H1 (cell line): ENCODE measurements at regions of chr2 and their contacts with region 1.

Region 1: DNA sequence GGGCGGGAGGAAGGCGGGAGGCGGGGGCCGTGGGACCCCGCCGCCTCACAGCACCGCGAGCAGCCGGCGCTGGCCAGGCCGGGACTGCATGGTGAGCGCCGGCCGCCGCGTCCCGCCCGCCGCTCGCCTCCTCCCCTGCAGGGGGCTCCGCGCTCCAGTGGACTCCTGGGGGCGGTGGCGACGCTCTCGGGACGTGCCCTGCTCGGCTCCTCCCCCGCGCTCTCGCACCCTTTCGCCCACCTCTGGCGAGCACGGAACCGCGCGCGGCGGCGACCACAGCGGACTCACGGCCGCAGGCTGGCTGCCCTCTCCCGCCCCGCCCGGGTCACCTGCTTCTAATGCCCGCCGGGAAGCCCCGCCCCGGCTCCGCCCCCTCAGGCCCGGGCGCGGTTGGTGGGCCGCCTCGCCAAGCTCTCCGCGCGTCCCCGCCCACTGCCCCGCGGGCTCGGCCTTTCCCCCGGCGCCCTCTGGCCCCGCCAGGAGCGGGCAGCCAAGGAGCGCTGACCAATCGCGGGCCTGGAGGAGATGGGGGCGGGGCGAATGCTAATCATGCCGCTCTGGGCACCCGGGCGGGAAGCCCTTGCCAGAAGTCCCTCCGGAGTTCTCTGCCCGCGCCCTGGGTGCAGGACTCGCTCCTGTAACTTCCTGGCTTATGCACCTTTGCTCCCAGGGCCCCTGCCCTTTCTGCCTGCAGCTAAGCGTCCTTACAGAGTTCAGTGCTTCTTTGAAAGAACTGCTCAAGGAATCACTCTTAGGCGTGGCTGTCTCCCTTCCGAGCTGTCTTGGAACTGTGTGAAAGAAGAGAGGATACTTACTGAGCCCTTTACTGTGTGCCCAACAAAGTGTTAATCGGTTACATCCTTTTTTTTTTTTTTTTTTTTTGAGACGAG is at the start of gene FZD5:
- DNase-seq: peak; percentile 94 to 99
- H3K4me3 ChIP-seq: peak within 1 kb of the TSS; percentile 84 to 96 (median 86)
- H3K27ac ChIP-seq: peak within 1 kb of the TSS; percentile 24; the same call in 1 of the 2 replicates
- H3K4me1 ChIP-seq: peaks cover 0 to 32% (median 26%) of the 10 kb centered on the region in 4 experiments; a peak in 6 of 7 replicates
- H3K27me3 ChIP-seq: peaks cover 0 to 4% (median 1%) of the 10 kb centered on the region in 4 experiments; a peak in 1 of 7 replicates
- CTCF ChIP-seq: peak; percentile 17 to 27 (median 25); a peak in 3 of 4 replicates
- EP300 ChIP-seq: no peak
- POLR2A ChIP-seq: peak; percentile 73 to 89
- RAD21 ChIP-seq: peak; percentile 28 to 48; a peak in 3 of 4 replicates
- total RNA-seq, gene FZD5: 55.2 and 56.6 TPM in 2 replicates

Region 2: DNA sequence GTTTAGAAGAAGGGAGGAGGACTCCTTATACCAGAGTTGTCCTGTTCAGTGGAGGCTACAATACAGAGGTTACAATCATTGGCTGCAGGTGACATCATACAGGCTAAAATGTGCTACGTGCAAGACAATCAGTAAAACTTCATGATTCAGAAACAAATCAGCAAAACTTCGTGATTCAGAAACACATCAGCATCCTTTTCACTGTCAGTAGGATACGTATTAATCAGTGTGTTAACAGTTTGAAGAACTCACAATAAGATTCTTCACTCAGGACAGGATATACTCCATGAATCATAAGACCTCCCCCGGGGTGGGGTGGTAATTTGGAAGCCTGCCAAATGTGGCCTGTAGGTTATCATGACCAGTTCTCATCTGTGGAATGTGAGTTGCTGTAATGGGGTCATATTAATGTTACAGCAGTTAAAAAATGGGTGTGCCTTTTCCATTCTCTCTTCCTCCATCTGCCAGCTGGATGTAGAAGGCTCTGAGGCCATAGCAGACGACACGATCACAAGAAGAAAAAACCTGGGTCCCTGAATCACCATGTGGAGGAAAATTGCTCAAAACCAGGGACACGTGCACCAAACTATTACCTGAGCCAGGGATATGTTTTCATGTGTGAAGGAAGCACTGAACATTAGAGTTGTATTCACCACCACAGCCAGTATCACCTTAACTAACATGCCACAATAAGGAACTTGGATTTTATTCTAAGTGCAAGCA is 374.9 kb before region 1 on chr2:
- CTCF ChIA-PET with region 1: no interaction called
- POLR2A ChIA-PET with region 1: no interaction called
- DNase-seq: no peak
- H3K4me3 ChIP-seq: no peak overlapping the region
- H3K27ac ChIP-seq: no peak overlapping the region
- H3K4me1 ChIP-seq: no peaks in the 10 kb centered on the region
- H3K27me3 ChIP-seq: no peaks in the 10 kb centered on the region
- CTCF ChIP-seq: no peak
- EP300 ChIP-seq: no peak
- POLR2A ChIP-seq: no peak
- RAD21 ChIP-seq: no peak

Region 3: GRCh38 chr2:207754498-207755383 is 15.1 kb before region 1 on chr2:
- CTCF ChIA-PET with region 1: interaction called, 18 read pairs
- POLR2A ChIA-PET with region 1: interaction called, 28 read pairs
- DNase-seq: no peak
- H3K4me3 ChIP-seq: no peak overlapping the region
- H3K27ac ChIP-seq: no peak overlapping the region
- H3K4me1 ChIP-seq: peaks cover 0 to 5% (median 0%) of the 10 kb centered on the region in 4 experiments; a peak in 1 of 7 replicates
- H3K27me3 ChIP-seq: no peaks in the 10 kb centered on the region
- CTCF ChIP-seq: no peak
- EP300 ChIP-seq: no peak
- POLR2A ChIP-seq: no peak
- RAD21 ChIP-seq: no peak

Region 4: GRCh38 chr2:207792244-207792785 is 22.5 kb after region 1 on chr2:
- CTCF ChIA-PET with region 1: interaction called, 8 read pairs
- POLR2A ChIA-PET with region 1: interaction called, 14 read pairs
- DNase-seq: no peak
- H3K4me3 ChIP-seq: no peak overlapping the region
- H3K27ac ChIP-seq: no peak overlapping the region
- H3K4me1 ChIP-seq: peaks cover 4 to 12% (median 11%) of the 10 kb centered on the region in 4 experiments; a peak in 5 of 7 replicates
- H3K27me3 ChIP-seq: no peaks in the 10 kb centered on the region
- CTCF ChIP-seq: no peak
- EP300 ChIP-seq: no peak
- POLR2A ChIP-seq: no peak
- RAD21 ChIP-seq: no peak

Region 5: GRCh38 chr2:207813221-207813916 is 43.5 kb after region 1 on chr2:
- CTCF ChIA-PET with region 1: interaction called, 10 read pairs
- POLR2A ChIA-PET with region 1: interaction called, 21 read pairs
- DNase-seq: no peak
- H3K4me3 ChIP-seq: peak overlapping the region in 1 of 4 experiments; percentile 31; a peak in 1 of 8 replicates
- H3K27ac ChIP-seq: no peak overlapping the region
- H3K4me1 ChIP-seq: peaks cover 6 to 30% (median 25%) of the 10 kb centered on the region in 4 experiments; a peak in 6 of 7 replicates
- H3K27me3 ChIP-seq: no peaks in the 10 kb centered on the region
- CTCF ChIP-seq: no peak
- EP300 ChIP-seq: no peak
- POLR2A ChIP-seq: no peak
- RAD21 ChIP-seq: no peak

Region 6: DNA sequence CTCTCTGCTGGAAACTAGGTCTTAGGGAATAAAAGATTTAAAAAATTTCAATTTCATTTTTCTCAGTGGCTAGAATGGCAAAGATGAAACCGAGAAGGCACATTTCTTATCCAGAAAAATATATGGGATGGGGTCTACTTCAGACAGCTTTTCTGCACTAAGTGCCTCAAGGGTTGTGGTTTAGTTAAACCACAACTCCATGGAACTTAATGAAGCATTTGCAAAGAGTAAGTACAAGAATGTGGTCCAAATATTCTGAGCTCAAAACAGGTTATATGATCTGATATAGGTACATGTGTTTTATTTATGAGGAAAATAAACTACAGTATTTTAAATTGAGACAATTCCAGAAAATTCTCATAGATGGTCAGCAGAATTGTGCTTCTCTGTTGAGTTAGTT is 101.7 kb after region 1 on chr2:
- CTCF ChIA-PET with region 1: no interaction called
- POLR2A ChIA-PET with region 1: no interaction called
- DNase-seq: no peak
- H3K4me3 ChIP-seq: no peak overlapping the region
- H3K27ac ChIP-seq: no peak overlapping the region
- H3K4me1 ChIP-seq: no peaks in the 10 kb centered on the region; a peak in 2 of 7 replicates
- H3K27me3 ChIP-seq: no peaks in the 10 kb centered on the region
- CTCF ChIP-seq: no peak
- EP300 ChIP-seq: no peak
- POLR2A ChIP-seq: no peak
- RAD21 ChIP-seq: no peak

Region 7: GRCh38 chr2:208033758-208034502 is 264.1 kb after region 1 on chr2:
- CTCF ChIA-PET with region 1: interaction called, 69 read pairs
- POLR2A ChIA-PET with region 1: interaction called, 3 read pairs
- DNase-seq: peak in 1 of 2 experiments; percentile 55
- H3K4me3 ChIP-seq: no peak overlapping the region
- H3K27ac ChIP-seq: no peak overlapping the region
- H3K4me1 ChIP-seq: no peaks in the 10 kb centered on the region
- H3K27me3 ChIP-seq: no peaks in the 10 kb centered on the region
- CTCF ChIP-seq: peak; percentile 47 to 83 (median 67)
- EP300 ChIP-seq: no peak
- POLR2A ChIP-seq: no peak
- RAD21 ChIP-seq: peak; percentile 91 to 93